Pancreas (tissue), 10 donors: ENCODE measurements at regions of chr5 and their contacts with region 1.

Region 1: DNA sequence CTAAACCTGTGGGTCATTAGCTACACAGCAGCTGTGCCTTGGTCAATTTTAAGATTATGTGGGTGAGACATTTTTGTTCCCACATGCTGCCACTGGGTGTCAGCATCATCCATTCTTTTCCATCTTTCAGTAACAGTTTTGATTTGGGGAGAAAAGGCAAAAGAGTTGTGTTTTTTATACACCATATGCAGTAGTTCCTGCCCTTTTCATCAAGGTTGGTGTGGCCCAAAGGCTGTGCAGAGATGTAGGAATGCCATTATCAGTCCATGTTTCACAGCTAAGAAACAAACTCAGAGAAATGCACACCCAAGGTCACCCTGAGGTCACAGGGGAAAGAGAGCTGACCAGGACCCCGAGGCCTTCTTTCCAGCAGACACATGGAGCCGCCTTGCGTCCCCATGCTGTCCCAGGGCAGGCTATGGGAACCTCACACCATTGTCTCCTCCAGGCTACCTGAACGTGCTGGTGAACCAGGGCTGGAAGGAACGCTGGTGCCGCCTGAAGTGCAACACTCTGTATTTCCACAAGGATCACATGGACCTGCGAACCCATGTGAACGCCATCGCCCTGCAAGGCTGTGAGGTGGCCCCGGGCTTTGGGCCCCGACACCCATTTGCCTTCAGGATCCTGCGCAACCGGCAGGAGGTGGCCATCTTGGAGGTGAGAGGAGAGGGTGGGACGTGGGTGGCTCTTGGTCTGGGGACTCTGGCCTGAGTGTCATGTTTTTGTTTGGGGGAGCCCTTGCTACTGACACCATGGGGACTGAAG is 27.8 kb upstream of the GRPEL2 start:
- DNase-seq: peak in 1 of 6 donors; percentile 28
- ATAC-seq: peak in 3 of 4 donors; percentile 50 to 61 (median 58)
- H3K4me3 ChIP-seq: no peak overlapping the region
- H3K27ac ChIP-seq: no peak overlapping the region
- H3K4me1 ChIP-seq: peaks cover 7 to 10% (median 9%) of the 10 kb centered on the region in 3 donors
- H3K27me3 ChIP-seq: no peaks in the 10 kb centered on the region
- CTCF ChIP-seq: peak; percentile 14 to 48 (median 42)

Region 2: DNA sequence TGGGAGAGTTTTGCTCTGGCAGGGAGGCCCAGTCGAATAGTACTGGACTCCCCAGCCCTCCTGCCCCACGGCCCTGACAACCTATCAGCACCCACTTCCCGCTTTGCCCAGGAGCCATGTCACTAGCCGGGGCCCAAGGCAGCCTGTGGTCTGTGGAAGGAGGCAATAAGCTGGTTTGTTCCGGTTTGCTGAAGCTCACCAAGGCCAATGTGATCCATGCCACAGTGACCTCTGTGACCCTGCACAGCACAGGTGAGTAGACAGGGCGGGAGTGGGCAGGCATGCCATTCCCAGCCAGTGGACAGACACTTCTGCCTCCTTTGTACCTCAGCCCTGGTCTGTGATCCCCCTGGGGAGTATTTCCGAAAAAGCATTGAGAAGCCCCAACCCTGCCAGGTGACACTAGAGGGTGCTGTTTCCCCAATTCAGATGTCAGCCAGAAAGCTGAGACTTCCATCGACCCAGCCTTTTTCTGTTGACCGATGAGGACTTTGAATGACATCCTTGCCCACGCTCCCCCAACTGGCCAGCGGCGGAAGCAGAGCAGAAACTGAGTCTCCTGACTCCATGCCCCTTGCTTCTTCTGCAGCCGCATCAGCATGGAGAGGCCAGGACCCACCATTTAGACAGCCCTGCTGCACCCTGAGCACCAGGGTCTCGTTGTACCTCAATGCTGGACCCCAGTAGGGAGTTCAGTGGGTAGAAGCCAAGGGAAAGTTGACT is 49.9 kb after region 1 on chr5:
- intact Hi-C with region 1: loop called in 1 of 3 experiments (anchors 5 kb)
- DNase-seq: peak in 4 of 6 donors; percentile 37 to 60 (median 44)
- ATAC-seq: peak; percentile 56 to 74 (median 74)
- H3K4me3 ChIP-seq: no peak overlapping the region
- H3K27ac ChIP-seq: no peak overlapping the region
- H3K4me1 ChIP-seq: peaks cover 0 to 3% (median 0%) of the 10 kb centered on the region in 3 donors
- H3K27me3 ChIP-seq: no peaks in the 10 kb centered on the region
- CTCF ChIP-seq: peak; percentile 46 to 66 (median 63)

Region 3: DNA sequence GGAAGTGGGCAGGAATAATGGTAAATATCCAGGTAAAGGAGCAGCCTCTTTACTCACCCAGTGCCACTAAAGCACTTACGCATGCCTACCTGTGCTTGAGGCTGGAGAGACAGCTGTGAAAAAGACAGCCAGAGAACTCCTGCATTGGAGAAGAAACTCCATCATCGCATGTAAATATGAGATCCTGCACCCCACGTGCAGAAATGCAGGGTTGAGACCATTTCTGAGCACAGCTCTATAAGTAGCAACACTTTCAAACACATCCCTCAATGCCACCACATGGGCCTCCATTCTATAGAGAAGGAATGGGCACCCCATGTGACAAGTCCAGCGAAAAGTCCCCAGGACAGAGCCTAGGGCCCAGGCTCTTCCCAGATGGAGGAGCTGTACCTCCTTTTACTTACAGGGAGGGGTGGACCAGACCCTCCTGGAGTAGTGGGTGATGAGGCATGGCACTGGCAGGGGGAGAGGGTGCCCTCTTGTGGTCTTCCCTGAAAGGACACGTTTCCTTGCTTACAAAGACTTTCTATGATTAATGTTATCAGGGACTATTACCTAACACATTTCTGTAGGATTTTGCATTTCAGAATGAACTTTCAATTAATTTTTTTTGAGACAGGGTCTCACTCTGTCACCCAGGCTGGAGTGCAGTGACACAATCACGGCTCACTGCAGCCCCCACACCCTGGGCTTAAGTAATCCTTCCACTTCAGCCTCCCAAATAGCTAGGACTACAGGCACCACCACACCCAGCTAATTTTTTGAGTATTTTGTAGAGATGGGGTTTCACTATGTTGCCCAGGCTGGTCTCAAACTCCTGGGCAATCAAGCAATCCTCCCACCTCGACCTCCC is 116.9 kb after region 1 on chr5:
- intact Hi-C with region 1: loop called in 1 of 3 experiments (anchors 10 kb)
- DNase-seq: peak in 2 of 6 donors; percentile 57 to 65
- ATAC-seq: peak; percentile 53 to 77 (median 68)
- H3K4me3 ChIP-seq: no peak overlapping the region
- H3K27ac ChIP-seq: no peak overlapping the region
- H3K4me1 ChIP-seq: no peaks in the 10 kb centered on the region
- H3K27me3 ChIP-seq: no peaks in the 10 kb centered on the region
- CTCF ChIP-seq: peak; percentile 69 to 87 (median 76)